K562 (cell line): ENCODE measurements at regions of chr16 and their contacts with region 1.

Region 1: DNA sequence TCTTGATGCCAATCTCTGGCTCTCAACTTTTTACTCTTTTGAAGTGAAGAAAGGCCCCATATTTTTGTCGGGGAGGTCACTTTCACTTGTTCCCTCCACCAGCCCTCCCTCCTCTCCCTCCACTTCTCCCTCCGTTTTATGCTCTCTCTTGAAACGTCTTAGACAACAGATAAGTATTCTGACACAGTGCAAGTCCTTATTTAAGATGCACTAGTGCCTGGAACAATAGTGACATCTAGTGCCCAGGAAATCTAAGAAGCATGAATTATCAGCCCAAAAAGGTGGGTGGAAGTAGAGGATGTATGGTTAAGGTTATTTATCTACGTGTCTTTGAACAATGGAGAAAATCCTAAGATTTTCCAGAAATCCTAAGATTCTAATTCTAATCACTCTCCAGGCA is 17.9 kb downstream of the PSME3IP1 start:
- DNase-seq: peak in 2 of 4 experiments; percentile 49 to 67
- ATAC-seq: peak; percentile 88
- H3K4me3 ChIP-seq: no peak overlapping the region
- H3K27ac ChIP-seq: no peak overlapping the region
- H3K4me1 ChIP-seq: no peaks in the 10 kb centered on the region
- H3K27me3 ChIP-seq: no peaks in the 10 kb centered on the region
- CTCF ChIP-seq: peak; percentile 55 to 79 (median 65)
- EP300 ChIP-seq: no peak
- POLR2A ChIP-seq: no peak
- RAD21 ChIP-seq: peak; percentile 70 to 81

Region 2: GRCh38 chr16:57084257-57084770 is 83.6 kb before region 1 on chr16:
- CTCF ChIA-PET with region 1: interaction called, 34 read pairs
- POLR2A ChIA-PET with region 1: no interaction called
- in situ Hi-C with region 1: loop called (anchors 5 kb)
- intact Hi-C with region 1: loop called (anchors 1 kb)
- DNase-seq: peak; percentile 82 to 86 (median 84)
- ATAC-seq: peak; percentile 91
- H3K4me3 ChIP-seq: no peak overlapping the region
- H3K27ac ChIP-seq: no peak overlapping the region
- H3K4me1 ChIP-seq: no peaks in the 10 kb centered on the region; a peak in 1 of 5 replicates
- H3K27me3 ChIP-seq: peaks cover 7 to 24% of the 10 kb centered on the region in 2 experiments; a peak in 4 of 5 replicates
- CTCF ChIP-seq: peak; percentile 93 to 97 (median 96)
- EP300 ChIP-seq: no peak
- POLR2A ChIP-seq: no peak
- RAD21 ChIP-seq: peak; percentile 78 to 92

Region 3: GRCh38 chr16:57089406-57089805 is 78.5 kb before region 1 on chr16:
- CTCF ChIA-PET with region 1: interaction called, 34 read pairs
- POLR2A ChIA-PET with region 1: no interaction called
- in situ Hi-C with region 1: loop called (anchors 5 kb)
- intact Hi-C with region 1: loop called (anchors 1 kb)
- DNase-seq: no peak
- ATAC-seq: no peak
- H3K4me3 ChIP-seq: no peak overlapping the region
- H3K27ac ChIP-seq: no peak overlapping the region
- H3K4me1 ChIP-seq: peaks cover 11 to 28% of the 10 kb centered on the region in 2 experiments; a peak in 4 of 5 replicates
- H3K27me3 ChIP-seq: peaks cover 2 to 4% of the 10 kb centered on the region in 2 experiments; a peak in 3 of 5 replicates
- CTCF ChIP-seq: no peak
- EP300 ChIP-seq: no peak
- POLR2A ChIP-seq: no peak
- RAD21 ChIP-seq: no peak

Region 4: DNA sequence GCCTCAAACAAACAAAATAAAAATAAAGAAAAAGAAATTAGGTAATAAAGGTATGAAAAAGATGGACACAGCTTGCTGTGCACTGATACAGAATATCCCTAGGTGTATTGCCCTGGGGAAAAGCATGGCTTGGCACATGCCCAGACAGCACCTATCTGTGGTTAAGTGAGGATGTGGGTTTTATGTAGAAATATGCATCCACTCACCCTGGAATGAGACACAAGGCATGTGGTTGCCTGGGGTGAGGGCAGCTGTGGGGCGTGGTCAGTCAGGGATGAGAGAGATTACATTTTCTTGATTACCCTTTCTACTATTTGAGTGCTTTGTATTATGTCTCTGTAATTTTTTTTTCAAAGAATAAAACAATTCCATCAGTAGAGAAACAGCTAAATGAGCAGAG is 109.6 kb after region 1 on chr16:
- CTCF ChIA-PET with region 1: no interaction called
- POLR2A ChIA-PET with region 1: no interaction called
- in situ Hi-C with region 1: no loop called
- intact Hi-C with region 1: no loop called
- DNase-seq: peak in 1 of 4 experiments; percentile 9
- ATAC-seq: no peak
- H3K4me3 ChIP-seq: no peak overlapping the region
- H3K27ac ChIP-seq: no peak overlapping the region
- H3K4me1 ChIP-seq: peaks cover 5 to 7% of the 10 kb centered on the region in 2 experiments; a peak in 3 of 5 replicates
- H3K27me3 ChIP-seq: peaks cover 0 to 3% of the 10 kb centered on the region in 2 experiments; a peak in 3 of 5 replicates
- CTCF ChIP-seq: no peak
- EP300 ChIP-seq: no peak
- POLR2A ChIP-seq: no peak
- RAD21 ChIP-seq: no peak

Region 5: DNA sequence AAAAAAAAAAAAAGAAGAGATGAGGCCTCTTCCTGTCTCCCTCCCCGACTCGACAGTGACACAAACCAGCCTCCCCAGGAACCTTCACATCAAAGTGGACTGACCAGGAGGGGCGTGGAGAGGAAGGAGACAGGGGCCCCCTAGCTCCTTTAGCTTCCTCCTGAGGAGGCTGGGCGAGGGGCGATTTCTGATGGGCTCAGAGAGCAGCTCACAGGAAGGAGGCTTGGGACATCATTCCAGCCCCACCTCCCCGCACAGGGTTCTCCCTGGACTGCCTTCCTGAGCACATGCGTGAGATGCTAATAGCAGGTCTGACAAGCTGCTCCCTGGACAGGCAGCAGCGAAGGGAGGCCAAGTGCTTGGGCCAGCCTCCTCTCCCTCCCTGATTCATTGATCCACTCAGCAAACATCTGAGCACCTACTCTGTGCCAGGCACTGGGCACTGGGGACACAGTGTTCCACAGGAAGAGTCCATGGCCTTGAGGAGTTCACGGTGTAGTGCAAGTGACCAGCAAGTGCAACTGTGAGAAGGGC is 332.7 kb after region 1 on chr16:
- CTCF ChIA-PET with region 1: no interaction called
- POLR2A ChIA-PET with region 1: no interaction called
- in situ Hi-C with region 1: no loop called
- intact Hi-C with region 1: no loop called
- DNase-seq: peak in 1 of 4 experiments; percentile 45
- ATAC-seq: peak; percentile 52
- H3K4me3 ChIP-seq: no peak overlapping the region
- H3K27ac ChIP-seq: no peak overlapping the region
- H3K4me1 ChIP-seq: peaks cover 8 to 10% of the 10 kb centered on the region in 2 experiments; a peak in 4 of 5 replicates
- H3K27me3 ChIP-seq: peaks cover 0 to 17% of the 10 kb centered on the region in 2 experiments; a peak in 3 of 5 replicates
- CTCF ChIP-seq: no peak
- EP300 ChIP-seq: no peak
- POLR2A ChIP-seq: no peak
- RAD21 ChIP-seq: no peak